ENCODE measurements at regions of chr7 and their contacts with region 1.

Region 1: GRCh38 chr7:92517631-92518030 is 10.7 kb downstream of the PEX1 start:
- H3K4me3 ChIP-seq: no peak overlapping the region
- H3K27ac ChIP-seq: no peak overlapping the region
- H3K4me1 ChIP-seq: no peaks in the 10 kb centered on the region
- CTCF ChIP-seq: no peak

Region 2: GRCh38 chr7:92528188-92528957 is 10.7 kb after region 1 on chr7 and contains the starts of genes PEX1 and RBM48:
- CTCF ChIA-PET with region 1: no interaction called
- POLR2A ChIA-PET with region 1: interaction called, 11 read pairs
- H3K4me3 ChIP-seq: peak within 1 kb of the TSS; percentile 72
- H3K27ac ChIP-seq: peak within 1 kb of the TSS; percentile 82
- H3K4me1 ChIP-seq: peaks cover 7% of the 10 kb centered on the region; the same call in 1 of the 2 replicates
- CTCF ChIP-seq: peak; percentile 85

Region 3: DNA sequence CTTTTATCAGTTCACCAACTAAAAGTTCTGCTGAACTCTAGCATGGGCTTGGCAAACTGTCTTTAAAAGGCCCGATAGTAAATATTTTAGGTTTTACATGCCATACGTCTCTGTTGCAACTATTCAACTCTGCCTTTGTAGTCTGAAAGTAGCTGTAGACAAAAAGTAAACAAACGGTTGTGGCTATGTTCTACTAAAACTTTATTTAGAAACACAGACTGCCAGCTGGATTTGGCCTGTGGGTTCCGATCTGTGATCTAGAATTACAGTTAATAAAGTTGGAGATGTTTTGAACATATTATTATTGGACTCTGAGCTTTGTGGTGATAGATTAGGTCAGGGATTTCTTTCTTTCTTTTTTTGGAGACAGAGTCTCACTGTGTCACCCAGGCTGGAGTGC is 747.6 kb after region 1 on chr7:
- CTCF ChIA-PET with region 1: no interaction called
- POLR2A ChIA-PET with region 1: no interaction called
- H3K4me3 ChIP-seq: no peak overlapping the region
- H3K27ac ChIP-seq: no peak overlapping the region
- H3K4me1 ChIP-seq: peaks cover 6% of the 10 kb centered on the region; the same call in 1 of the 2 replicates
- CTCF ChIP-seq: no peak